ENCODE measurements at regions of chr4 and their contacts with region 1.

Region 1: GRCh38 chr4:54322818-54323417 is 93.8 kb downstream of the PDGFRA start:
- DNase-seq: peak; percentile 74 to 79
- H3K4me3 ChIP-seq: no peak overlapping the region
- H3K4me1 ChIP-seq: no peaks in the 10 kb centered on the region
- H3K27me3 ChIP-seq: peaks cover 3% of the 10 kb centered on the region; the same call in 1 of the 2 replicates

Region 2: GRCh38 chr4:54439831-54440243 is 116.9 kb after region 1 on chr4:
- in situ Hi-C with region 1: loop called (anchors 10 kb)
- DNase-seq: no peak
- H3K4me3 ChIP-seq: no peak overlapping the region
- H3K4me1 ChIP-seq: 0 out of 2 replicates have a peak, but pooled peaks cover 4% of the 10 kb centered on the region
- H3K27me3 ChIP-seq: peaks cover 84% of the 10 kb centered on the region

Region 3: GRCh38 chr4:54553001-54553400 is 230.1 kb after region 1 on chr4:
- in situ Hi-C with region 1: no loop called
- DNase-seq: no peak
- H3K4me3 ChIP-seq: no peak overlapping the region
- H3K4me1 ChIP-seq: no peaks in the 10 kb centered on the region
- H3K27me3 ChIP-seq: no peaks in the 10 kb centered on the region

Region 4: DNA sequence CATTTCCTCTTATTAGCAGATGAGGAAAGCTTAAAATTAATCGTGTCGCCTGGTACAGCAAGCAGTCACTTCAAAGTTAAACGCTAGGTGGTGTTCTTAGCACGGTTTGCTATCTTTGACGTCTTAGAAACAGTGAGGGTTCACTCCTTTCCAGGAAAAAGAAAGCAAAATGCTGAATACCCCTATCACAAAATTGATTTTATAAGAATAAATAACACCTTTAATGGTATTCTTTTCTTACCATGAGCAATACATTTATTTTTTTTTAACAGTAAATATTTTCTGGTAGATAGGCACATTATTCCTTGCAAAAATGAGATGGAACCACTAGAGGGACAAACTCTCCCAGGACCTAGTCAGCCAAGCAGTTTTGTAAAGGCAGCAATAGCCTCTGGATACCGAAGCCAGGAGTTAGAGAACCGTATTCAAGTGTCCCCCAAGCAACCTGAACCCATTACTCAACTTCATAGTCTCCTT is 648.6 kb after region 1 on chr4:
- in situ Hi-C with region 1: loop called (anchors 25 kb)
- DNase-seq: peak; percentile 47 to 59
- H3K4me3 ChIP-seq: no peak overlapping the region
- H3K4me1 ChIP-seq: no peaks in the 10 kb centered on the region
- H3K27me3 ChIP-seq: no peaks in the 10 kb centered on the region; the same call in 1 of the 2 replicates

Region 5: DNA sequence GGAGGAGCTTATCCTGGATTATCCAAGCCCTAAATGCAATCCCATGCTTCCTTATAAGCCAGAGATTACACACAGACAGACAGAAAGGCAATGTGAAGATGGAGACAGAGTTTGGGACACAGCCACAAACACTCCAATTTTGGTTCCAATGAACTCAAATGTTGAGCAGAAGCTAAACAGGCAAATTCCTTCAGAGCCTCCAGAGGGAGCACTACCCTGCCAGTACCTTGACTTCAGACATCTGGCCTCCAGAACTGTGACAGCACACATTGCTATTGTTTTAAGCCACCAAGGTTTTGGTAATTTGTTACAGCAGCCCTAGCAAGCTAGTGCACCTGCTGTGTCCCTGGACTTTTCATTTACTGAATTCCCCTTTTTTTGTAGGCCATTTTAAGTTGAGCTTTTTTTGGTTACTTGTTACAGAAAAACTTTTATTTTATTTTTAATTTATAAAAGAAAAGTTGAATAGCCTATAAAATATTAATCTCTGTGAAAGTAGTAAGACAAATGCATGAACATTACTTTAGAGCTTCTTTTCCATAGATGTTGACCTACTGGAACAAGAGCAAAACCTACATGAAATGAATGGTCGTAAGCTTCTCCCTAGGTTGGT is 989.7 kb after region 1 on chr4:
- in situ Hi-C with region 1: loop called (anchors 25 kb)
- DNase-seq: peak; percentile 46 to 54
- H3K4me3 ChIP-seq: no peak overlapping the region
- H3K4me1 ChIP-seq: no peaks in the 10 kb centered on the region
- H3K27me3 ChIP-seq: peaks cover 16% of the 10 kb centered on the region

Measured in HAP-1 (cell line).